HEK293 (cell line): ENCODE measurements at regions of chr2 and their contacts with region 1.

Region 1: DNA sequence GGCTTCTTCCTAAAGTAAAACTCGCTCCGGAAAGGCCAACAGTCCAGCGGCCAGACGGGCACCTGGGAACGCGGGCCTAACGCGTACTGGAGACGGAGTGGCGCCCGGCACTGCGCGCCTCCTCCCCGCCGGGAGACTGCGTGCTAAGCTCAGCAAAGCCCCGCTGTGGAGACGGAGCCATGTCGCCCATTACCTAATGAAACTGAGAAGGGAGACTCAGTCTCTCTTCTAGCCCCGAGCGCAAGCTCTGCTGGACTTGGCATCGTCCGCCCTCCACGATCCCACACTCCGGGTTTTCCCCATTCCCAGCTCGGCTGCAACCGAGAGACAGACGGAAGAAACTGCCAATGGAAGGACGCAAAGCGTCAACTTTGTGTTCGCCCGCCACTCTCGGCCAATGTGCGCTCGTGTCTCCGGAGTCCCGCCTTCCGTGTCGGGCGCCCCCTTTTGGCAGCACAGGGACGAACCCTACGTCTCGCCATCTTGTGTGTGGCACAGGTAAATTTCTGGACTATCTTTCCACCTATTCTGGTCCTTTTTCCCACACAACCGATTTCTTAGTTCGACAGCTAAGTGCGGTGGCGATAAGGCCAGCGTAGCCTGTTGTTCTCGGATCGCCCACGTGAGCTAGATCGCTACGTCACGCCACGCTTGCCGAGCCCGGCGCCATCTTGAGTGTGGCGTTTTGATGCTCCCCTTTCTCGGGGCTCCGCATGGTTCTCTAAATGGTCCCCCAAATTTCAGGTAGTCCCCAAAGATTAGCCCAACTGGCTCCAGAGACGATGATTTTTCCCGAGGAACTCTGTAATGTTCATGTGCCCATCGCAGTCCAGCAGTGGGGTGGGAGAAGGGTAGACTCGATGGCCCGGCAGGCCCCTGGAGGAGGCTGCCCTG is 1.3 kb upstream of the PTMA start:
- H3K4me3 ChIP-seq: peak overlapping the region; percentile 82
- H3K27ac ChIP-seq: peak overlapping the region; percentile 98
- H3K4me1 ChIP-seq: peaks cover 1% of the 10 kb centered on the region
- CTCF ChIP-seq: peak; percentile 100

Region 2: GRCh38 chr2:231463698-231464575 is 243.0 kb before region 1 on chr2 and contains the start of gene NCL:
- CTCF ChIA-PET with region 1: no interaction called
- POLR2A ChIA-PET with region 1: interaction called, 14 read pairs
- H3K4me3 ChIP-seq: peak within 1 kb of the TSS; percentile 83
- H3K27ac ChIP-seq: peak within 1 kb of the TSS; percentile 99
- H3K4me1 ChIP-seq: no peaks in the 10 kb centered on the region
- CTCF ChIP-seq: peak; percentile 59

Region 3: DNA sequence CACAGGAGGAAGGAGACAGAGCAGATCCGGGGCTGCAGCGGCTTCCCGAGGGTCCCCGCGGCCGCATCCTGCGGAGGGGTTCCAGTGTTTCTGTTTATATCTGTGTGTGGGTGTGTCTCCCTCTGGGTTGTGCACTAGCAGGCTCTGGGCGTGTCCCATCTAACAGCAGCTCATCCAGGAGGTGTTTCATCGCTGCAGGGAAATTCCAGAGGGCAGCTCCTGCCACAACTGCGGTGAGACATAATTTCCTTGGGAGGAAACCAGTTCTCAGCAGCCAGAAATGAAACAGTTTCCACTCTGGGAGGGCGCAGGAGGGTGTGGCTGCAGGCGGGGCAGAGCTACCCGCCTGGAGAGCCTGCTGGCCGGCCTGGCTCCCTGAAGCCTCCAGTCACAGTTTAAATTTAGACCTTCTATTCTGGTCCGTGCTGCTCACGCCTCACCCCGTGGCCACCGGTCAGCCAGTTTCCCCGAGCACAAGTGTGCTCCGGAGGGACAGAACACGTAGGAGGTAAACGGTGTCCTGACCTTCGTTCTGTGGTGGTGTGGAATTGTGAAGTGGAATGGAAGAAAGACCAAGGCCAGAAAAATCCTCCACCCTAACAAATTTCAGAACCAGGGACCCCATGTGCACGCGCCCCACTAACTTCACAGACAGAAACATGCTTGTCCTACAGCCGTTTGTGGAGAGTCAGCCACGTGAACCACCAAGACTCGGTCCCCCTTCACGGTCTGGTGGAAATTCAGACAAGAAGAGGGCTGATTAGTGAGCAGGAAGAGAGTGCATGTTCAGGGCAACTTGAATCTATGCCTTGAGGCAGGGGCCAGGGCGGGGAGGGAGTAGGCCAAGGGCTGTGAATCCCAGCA is 64.1 kb before region 1 on chr2:
- CTCF ChIA-PET with region 1: no interaction called
- POLR2A ChIA-PET with region 1: interaction called, 14 read pairs
- H3K4me3 ChIP-seq: peak overlapping the region; percentile 13; the same call in 1 of the 2 replicates
- H3K27ac ChIP-seq: no peak overlapping the region
- H3K4me1 ChIP-seq: no peaks in the 10 kb centered on the region
- CTCF ChIP-seq: no peak

Region 4: GRCh38 chr2:231662028-231662810 is 44.8 kb before region 1 on chr2:
- CTCF ChIA-PET with region 1: interaction called, 3 read pairs
- POLR2A ChIA-PET with region 1: interaction called, 31 read pairs
- H3K4me3 ChIP-seq: no peak overlapping the region
- H3K27ac ChIP-seq: peak overlapping the region; percentile 13; the same call in 1 of the 2 replicates
- H3K4me1 ChIP-seq: 0 out of 2 replicates have a peak, but pooled peaks cover 3% of the 10 kb centered on the region
- CTCF ChIP-seq: no peak

Region 5: DNA sequence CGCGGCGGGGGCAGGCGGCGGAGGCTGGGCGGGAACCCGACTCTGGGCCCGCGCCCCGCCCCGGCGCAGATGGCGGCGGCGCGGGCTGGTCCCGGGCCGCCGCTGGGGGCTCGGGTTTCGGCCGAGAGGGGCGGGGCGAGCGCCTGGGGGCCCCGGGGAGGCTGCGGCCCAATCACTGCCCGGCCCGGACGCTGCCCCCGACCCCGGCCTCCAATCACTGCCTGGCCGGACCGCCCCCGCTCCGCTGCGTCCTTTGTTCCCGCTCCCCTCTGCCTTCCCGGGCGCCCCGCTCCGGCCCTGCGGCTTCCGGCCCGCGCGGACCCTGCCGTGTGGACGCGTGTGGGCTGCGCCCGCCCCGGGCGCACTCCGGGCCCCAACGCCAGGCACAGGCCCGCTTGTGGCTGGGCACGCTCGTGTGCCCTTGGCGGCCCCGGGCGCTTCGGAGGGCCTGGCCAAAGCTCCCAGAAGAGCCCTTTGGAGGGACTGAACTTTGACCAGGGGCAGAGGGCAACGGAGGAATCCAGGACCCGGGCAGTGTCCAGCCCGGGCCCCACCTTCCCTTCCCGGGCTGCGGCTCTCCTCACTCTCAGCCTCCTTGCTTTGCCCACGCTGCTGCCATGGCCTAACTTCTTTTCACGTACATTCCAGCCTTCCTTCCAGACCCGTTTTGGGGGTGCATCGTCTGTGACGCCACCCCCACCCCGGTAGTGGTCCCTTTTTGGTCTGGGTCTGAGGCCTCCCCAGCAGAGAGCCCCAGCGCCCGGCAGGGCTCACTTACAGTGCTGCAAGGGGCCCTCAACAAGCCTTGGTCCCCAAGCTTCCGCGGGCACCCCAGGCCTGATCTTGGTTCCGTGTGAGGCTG is 25.8 kb before region 1 on chr2:
- CTCF ChIA-PET with region 1: interaction called, 31 read pairs
- POLR2A ChIA-PET with region 1: interaction called, 41 read pairs
- H3K4me3 ChIP-seq: peak overlapping the region; percentile 37
- H3K27ac ChIP-seq: peak overlapping the region; percentile 86
- H3K4me1 ChIP-seq: peaks cover 5% of the 10 kb centered on the region
- CTCF ChIP-seq: no peak

Region 6: GRCh38 chr2:231696007-231696371 is 11.0 kb before region 1 on chr2:
- CTCF ChIA-PET with region 1: interaction called, 10 read pairs
- POLR2A ChIA-PET with region 1: interaction called, 13 read pairs
- H3K4me3 ChIP-seq: no peak overlapping the region
- H3K27ac ChIP-seq: no peak overlapping the region
- H3K4me1 ChIP-seq: no peaks in the 10 kb centered on the region
- CTCF ChIP-seq: no peak

Region 7: DNA sequence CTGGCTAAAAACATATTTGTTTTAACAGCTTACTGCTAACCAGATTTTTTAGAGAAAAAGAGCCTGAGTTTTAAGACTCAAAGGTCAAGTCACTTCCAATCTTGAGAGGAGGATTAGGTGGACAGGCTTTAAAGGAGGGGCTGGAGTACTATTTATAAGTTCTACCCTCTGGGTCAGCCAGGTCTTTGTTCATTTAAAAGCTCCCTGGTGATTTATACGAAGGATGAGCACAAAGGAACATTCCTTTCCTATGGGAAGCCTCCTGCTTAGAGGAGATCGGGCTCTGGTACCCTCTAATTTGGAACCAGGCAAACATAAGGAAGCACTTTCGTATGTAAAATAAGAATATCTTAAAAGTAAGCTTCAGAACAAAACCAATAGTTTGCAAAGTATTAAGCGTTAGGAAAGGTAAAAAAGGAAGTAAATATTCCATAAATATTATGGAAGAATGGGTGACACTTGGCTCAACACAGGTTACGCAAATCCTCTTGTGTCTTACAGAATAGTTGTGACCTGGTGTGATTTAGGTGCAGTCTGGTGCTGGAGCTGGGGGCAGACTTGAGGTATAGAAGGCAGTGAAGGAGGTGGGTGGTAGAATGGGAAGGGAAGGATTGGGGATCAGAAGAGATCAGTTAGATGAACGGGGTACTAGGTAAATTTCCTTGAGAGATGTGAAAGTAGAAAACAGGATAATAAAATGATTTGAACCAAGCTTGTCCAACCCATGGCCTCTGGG is 38.5 kb after region 1 on chr2:
- CTCF ChIA-PET with region 1: no interaction called
- POLR2A ChIA-PET with region 1: no interaction called
- H3K4me3 ChIP-seq: no peak overlapping the region
- H3K27ac ChIP-seq: no peak overlapping the region
- H3K4me1 ChIP-seq: no peaks in the 10 kb centered on the region
- CTCF ChIP-seq: no peak